GM23248 (cell line): ENCODE measurements at regions of chr5 and their contacts with region 1.

Region 1: GRCh38 chr5:91101600-91102379 is 281.3 kb downstream of the ARRDC3 start:
- DNase-seq: peak; percentile 88
- H3K4me3 ChIP-seq: no peak overlapping the region
- H3K27ac ChIP-seq: no peak overlapping the region
- H3K4me1 ChIP-seq: peaks cover 14% of the 10 kb centered on the region; the same call in 1 of the 2 replicates
- H3K27me3 ChIP-seq: no peaks in the 10 kb centered on the region

Region 2: GRCh38 chr5:90932052-90932699 is 169.6 kb before region 1 on chr5:
- in situ Hi-C with region 1: loop called (anchors 10 kb)
- DNase-seq: peak; percentile 77
- H3K4me3 ChIP-seq: no peak overlapping the region
- H3K27ac ChIP-seq: no peak overlapping the region
- H3K4me1 ChIP-seq: no peaks in the 10 kb centered on the region
- H3K27me3 ChIP-seq: no peaks in the 10 kb centered on the region

Region 3: GRCh38 chr5:91307048-91307447 is 205.3 kb after region 1 on chr5:
- in situ Hi-C with region 1: no loop called
- DNase-seq: peak; percentile 94
- H3K4me3 ChIP-seq: no peak overlapping the region
- H3K27ac ChIP-seq: peak overlapping the region; percentile 91
- H3K4me1 ChIP-seq: peaks cover 33% of the 10 kb centered on the region
- H3K27me3 ChIP-seq: no peaks in the 10 kb centered on the region